ENCODE measurements at regions of chr11 and their contacts with region 1.

Region 1: DNA sequence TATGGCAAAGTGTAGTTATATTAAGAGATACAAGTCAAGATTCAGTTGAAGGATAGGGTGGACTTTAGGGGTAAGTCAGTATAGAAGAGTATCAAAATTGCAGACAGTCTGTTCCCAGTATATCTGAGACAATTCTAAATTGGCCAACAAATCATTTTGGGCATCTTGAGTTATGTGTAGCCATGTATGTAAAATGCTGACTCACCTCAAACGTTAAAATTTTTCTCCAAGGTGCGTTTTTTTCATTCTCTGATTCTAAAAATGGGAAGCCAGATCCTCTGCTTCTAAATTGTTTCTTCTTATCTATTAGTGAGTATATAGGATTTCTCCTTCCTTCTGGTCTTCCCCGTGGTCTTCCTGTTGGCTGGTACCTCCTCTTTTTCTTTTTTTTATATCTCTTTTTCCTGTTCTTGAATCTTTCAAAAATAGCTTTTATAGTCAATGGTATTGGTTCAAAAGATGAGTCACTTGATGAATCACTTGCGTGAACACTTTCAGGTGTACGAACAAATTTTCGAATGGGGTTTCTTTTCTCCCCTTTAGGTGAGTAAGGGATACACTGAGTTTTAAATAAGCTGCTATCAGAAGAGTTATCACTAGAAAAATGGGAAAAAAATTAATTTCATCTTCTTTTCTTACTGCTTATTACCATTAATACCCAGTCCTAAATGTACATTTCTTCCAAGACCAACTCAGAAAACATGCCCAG is 3.2 kb downstream of the TAF1D start:
- DNase-seq: no peak
- ATAC-seq: no peak
- H3K4me3 ChIP-seq: no peak overlapping the region
- H3K27ac ChIP-seq: no peak overlapping the region
- H3K4me1 ChIP-seq: peaks cover 0 to 27% (median 7%) of the 10 kb centered on the region in 4 donors
- H3K27me3 ChIP-seq: no peaks in the 10 kb centered on the region
- CTCF ChIP-seq: no peak
- POLR2A ChIP-seq: no peak

Region 2: DNA sequence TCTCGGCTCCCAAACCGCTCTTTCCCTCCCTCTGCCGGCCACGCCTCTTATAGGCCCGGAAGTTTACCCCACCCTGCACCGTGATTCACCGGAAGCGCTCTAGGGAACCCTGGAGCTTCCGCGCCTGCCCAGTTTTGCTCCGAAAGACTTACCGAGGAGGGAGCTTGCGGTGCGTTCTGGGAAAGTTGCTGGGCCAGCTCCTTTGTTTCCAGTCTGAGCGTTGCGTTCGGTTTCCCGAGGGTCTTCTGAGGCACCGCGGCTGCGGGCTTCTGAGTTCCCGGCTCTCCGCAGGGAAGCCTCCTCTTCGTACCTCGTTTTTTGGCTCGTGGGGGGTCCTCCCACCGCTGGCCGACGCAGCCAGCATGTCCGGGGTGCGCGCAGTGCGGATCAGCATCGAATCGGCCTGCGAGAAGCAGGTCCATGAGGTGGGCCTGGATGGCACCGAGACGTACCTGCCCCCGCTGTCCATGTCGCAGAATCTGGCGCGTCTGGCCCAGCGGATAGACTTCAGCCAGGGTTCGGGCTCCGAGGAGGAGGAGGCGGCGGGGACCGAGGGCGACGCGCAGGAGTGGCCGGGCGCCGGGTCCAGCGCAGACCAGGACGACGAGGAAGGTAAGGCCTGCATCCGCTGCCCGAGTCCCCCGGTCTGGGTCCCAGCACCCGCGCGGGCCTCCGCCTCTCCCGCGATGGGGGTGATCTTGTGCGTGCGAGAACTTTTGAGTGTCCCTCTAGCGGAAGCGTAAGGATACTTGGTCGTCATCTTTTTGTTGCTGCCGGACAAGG is 46.3 kb after region 1 on chr11 and contains the start of gene MED17:
- intact Hi-C with region 1: loop called in 1 of 2 experiments (anchors 10 kb)
- DNase-seq: peak; percentile 93 to 96 (median 95)
- ATAC-seq: peak; percentile 99 to 100 (median 99)
- H3K4me3 ChIP-seq: peak within 1 kb of the TSS; percentile 82 to 96 (median 96)
- H3K27ac ChIP-seq: peak within 1 kb of the TSS; percentile 88 to 93 (median 92)
- H3K4me1 ChIP-seq: peaks cover 0 to 19% (median 5%) of the 10 kb centered on the region in 4 donors
- H3K27me3 ChIP-seq: no peaks in the 10 kb centered on the region
- CTCF ChIP-seq: peak; percentile 39 to 50 (median 43)
- POLR2A ChIP-seq: peak; percentile 79
- total RNA-seq, gene MED17: 4.8 to 10.1 (median 8.5) TPM

Measured in right lobe of liver (tissue), 6 donors.